ENCODE measurements at regions of chr10 and their contacts with region 1.

Region 1: DNA sequence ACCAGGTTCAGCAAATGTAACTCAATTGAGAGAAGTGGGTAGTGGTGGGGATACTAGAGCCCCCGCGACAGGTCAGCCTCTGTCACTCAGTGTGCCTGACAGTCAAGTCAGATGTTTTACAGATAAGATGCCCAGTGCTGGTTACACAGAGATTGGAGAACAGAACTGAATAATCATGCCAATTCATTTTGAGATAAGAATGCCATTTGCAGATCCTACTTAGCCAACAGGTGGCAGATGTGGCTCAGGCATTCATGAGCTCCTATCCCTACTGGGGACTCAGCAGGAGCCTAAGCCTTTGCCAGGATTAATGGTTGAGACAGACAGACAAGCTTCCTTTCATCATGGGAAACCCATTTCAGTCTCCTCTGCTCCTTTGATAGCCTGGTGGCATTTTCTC is 137.8 kb downstream of the MAPK8 start:
- DNase-seq: peak; percentile 14
- ATAC-seq: 0 out of 3 replicates have a peak, but pooled peaks have one; percentile 7
- H3K4me3 ChIP-seq: no peak overlapping the region
- H3K27ac ChIP-seq: no peak overlapping the region
- H3K4me1 ChIP-seq: peaks cover 12% of the 10 kb centered on the region
- H3K27me3 ChIP-seq: peaks cover 0 to 3% of the 10 kb centered on the region in 2 experiments; a peak in 2 of 5 replicates
- CTCF ChIP-seq: peak; percentile 35
- EP300 ChIP-seq: no peak
- POLR2A ChIP-seq: no peak
- RAD21 ChIP-seq: no peak

Region 2: GRCh38 chr10:48493083-48493871 is 49.0 kb after region 1 on chr10:
- CTCF ChIA-PET with region 1: no interaction called
- POLR2A ChIA-PET with region 1: no interaction called
- in situ Hi-C with region 1: no loop called
- intact Hi-C with region 1: no loop called
- DNase-seq: no peak
- ATAC-seq: no peak
- H3K4me3 ChIP-seq: no peak overlapping the region
- H3K27ac ChIP-seq: no peak overlapping the region
- H3K4me1 ChIP-seq: no peaks in the 10 kb centered on the region
- H3K27me3 ChIP-seq: peaks cover 2 to 10% of the 10 kb centered on the region in 2 experiments; a peak in 1 of 5 replicates
- CTCF ChIP-seq: no peak
- EP300 ChIP-seq: no peak
- POLR2A ChIP-seq: no peak
- RAD21 ChIP-seq: no peak

Region 3: GRCh38 chr10:48506147-48506917 is 62.1 kb after region 1 on chr10:
- CTCF ChIA-PET with region 1: no interaction called
- POLR2A ChIA-PET with region 1: no interaction called
- in situ Hi-C with region 1: no loop called
- intact Hi-C with region 1: loop called (anchors 2 kb)
- DNase-seq: peak; percentile 88
- ATAC-seq: peak; percentile 96
- H3K4me3 ChIP-seq: no peak overlapping the region
- H3K27ac ChIP-seq: no peak overlapping the region
- H3K4me1 ChIP-seq: 0 out of 2 replicates have a peak, but pooled peaks cover 6% of the 10 kb centered on the region
- H3K27me3 ChIP-seq: no peaks in the 10 kb centered on the region; a peak in 2 of 5 replicates
- CTCF ChIP-seq: peak; percentile 93
- EP300 ChIP-seq: no peak
- POLR2A ChIP-seq: no peak
- RAD21 ChIP-seq: peak; percentile 83

Region 4: DNA sequence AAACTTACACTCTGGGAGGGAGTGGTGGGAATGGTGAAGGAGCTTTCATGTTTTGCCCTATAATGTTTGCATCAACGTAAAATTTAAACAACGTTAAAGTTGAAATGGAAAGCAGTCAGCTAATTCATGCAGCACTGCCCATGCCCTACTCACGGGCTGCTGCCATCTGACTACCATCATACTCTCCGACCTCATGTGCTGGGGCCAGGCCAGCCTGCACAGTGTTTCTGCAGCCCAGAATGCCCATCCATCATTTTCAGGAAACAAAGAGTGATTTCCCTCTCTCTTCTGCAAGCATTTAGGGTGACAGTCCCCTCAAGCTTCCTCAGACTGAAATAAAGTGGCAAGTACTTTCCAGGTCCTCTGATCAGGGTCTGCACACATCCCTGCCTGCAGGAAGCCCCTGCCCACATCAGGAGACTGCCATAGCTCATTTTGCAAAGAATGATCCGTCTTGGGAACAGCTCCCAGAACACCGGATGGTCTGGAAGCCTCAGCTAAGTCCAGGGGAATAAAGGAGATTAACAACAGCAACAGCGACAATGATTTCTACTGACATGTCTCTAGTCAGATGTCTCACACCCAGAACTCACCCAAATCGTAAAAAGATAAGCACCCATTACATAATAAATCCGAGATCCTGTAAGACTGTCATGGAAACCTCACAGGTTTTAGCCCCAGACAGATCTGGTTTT is 120.3 kb after region 1 on chr10:
- CTCF ChIA-PET with region 1: no interaction called
- POLR2A ChIA-PET with region 1: no interaction called
- in situ Hi-C with region 1: no loop called
- intact Hi-C with region 1: no loop called
- DNase-seq: no peak
- ATAC-seq: no peak
- H3K4me3 ChIP-seq: no peak overlapping the region
- H3K27ac ChIP-seq: no peak overlapping the region
- H3K4me1 ChIP-seq: no peaks in the 10 kb centered on the region
- H3K27me3 ChIP-seq: peaks cover 3 to 5% of the 10 kb centered on the region in 2 experiments; a peak in 1 of 5 replicates
- CTCF ChIP-seq: no peak
- EP300 ChIP-seq: no peak
- POLR2A ChIP-seq: no peak
- RAD21 ChIP-seq: no peak

Measured in HepG2 (cell line).